HCT116 (cell line): ENCODE measurements at regions of chr1 and their contacts with region 1.

Region 1: DNA sequence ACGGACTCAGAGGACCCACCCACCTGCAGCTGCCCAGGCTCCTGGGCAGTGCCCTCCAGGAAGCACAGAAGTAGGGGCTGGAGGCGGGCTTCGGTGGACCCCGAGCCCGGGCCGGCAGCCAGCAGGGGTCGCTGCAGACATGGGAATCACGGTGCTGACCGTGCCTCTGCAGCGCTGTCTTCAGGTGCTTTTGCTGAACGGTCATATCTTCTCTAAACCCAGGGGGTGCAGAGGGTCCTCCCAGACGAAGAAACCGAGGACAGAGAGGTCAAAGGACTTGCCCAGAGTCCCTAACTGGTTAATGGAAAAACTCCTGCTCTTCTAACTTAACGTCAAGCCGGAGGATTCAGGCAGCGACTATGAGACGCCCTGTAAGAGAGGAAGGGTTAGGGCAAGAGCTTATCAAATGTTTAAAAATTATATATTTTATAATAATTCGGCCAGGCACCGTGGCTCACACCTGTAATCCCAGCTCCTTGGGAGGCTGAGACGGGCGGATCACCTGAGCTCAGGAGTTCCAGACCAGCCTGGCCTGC is 21.5 kb upstream of the LEFTY2 start:
- DNase-seq: no peak
- ATAC-seq: peak; percentile 96
- H3K4me3 ChIP-seq: no peak overlapping the region
- H3K27ac ChIP-seq: no peak overlapping the region
- H3K4me1 ChIP-seq: peaks cover 0 to 8% of the 10 kb centered on the region in 2 experiments; a peak in 2 of 4 replicates
- H3K27me3 ChIP-seq: no peaks in the 10 kb centered on the region
- CTCF ChIP-seq: peak; percentile 86 to 92 (median 90)
- POLR2A ChIP-seq: no peak
- RAD21 ChIP-seq: peak; percentile 68

Region 2: DNA sequence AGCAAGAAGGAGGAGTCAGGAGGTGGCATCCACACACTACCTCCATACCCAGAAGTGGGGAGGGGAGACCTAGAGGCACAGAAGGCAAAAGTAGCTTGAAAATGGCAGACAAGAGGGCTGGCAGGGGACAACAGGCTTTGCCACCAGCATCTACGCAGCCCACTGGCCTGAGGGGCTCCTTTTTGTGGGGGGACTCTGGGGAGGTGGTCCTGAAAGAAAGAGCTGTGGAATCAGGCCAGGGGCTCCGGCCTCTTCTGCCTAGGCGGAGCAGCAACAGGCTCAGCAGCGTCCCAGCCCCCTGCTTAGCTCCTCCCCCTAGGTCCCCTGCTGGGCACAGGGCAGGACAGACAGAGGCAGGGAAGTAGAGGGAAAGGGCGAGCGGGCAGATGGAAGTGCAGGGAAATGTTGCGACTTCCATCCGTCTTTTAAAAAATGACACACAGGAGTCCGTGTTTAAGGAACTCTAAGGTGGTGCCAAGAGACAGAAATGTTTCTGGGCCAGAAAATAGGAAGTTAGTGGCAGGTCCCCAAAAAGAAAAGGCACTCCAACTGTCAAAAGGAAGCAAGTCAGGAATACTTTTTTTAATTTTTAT is 11.5 kb before region 1 on chr1:
- CTCF ChIA-PET with region 1: interaction called, 15 read pairs
- POLR2A ChIA-PET with region 1: no interaction called
- RAD21 ChIA-PET with region 1: no interaction called
- intact Hi-C with region 1: no loop called
- DNase-seq: no peak
- ATAC-seq: peak; percentile 85
- H3K4me3 ChIP-seq: no peak overlapping the region
- H3K27ac ChIP-seq: no peak overlapping the region
- H3K4me1 ChIP-seq: peaks cover 3% of the 10 kb centered on the region in 2 experiments; a peak in 1 of 4 replicates
- H3K27me3 ChIP-seq: no peaks in the 10 kb centered on the region
- CTCF ChIP-seq: no peak
- POLR2A ChIP-seq: no peak
- RAD21 ChIP-seq: no peak